Activated CD4-positive, alpha-beta memory T cell treated with anti-CD3 and anti-CD28 coated beads for 36 hours (primary cell): ENCODE measurements at regions of chr2 and their contacts with region 1.

Region 1: GRCh38 chr2:135985018-135985825 is at the start of gene DARS1:
- DNase-seq: peak; percentile 92
- H3K4me3 Mint-ChIP-seq: peak within 1 kb of the TSS; percentile 90
- H3K27ac Mint-ChIP-seq: peak within 1 kb of the TSS; percentile 97
- H3K4me1 Mint-ChIP-seq: peaks cover 48% of the 10 kb centered on the region
- H3K27me3 Mint-ChIP-seq: no peaks in the 10 kb centered on the region
- total RNA-seq, gene DARS1: 215 to 218 TPM

Region 2: DNA sequence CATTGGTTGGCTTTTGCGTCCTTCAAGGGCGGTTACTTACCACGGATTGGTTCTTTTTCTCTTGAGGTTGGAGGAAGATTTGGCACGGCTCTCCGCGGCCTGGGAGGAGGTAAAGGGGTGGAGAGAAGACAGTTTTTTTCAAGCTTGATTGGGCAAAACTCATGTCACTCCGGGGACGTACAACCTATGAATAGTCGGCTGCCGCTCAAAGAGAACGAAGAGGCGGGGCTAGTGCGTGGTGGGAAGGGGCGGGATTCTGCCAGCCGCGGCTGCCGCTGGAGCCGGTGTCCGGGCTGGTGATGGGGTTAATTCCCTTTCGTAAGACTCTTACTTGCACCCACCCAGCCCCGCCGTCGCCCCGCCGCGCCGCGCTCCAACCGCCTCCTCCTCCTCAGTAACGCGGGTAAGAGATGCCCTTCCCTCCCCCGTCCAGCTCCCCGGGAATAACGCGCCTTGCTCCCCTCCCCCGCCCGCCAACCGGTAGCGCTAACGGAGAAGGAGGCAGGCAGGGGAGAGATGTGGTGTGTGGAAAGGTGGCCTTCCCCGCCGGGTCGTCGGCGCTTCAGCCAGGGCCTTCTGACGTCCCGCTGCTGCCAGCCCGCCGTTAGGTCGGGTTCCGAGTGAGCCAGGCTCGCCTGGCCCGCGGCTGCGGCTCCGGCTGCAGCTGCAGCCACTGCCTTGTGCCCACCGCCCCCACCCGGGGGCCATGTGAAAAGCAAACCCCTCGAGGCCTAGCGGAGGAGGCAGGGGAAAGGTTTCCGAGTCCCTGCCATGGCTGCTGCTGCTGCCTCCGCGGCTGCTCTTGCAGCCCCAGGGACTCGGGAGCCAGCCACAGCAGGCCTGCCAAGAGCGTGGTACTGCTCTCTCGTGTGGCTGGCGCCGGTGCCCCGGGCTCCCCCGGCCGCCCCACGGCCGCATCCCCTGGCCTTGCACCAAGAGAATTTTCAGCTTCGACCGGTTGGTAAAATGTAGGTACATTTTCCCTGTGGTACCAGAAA is 453.7 kb before region 1 on chr2 and contains the start of gene R3HDM1:
- CTCF ChIA-PET with region 1: no interaction called
- POLR2A ChIA-PET with region 1: no interaction called
- intact Hi-C with region 1: loop called (anchors 2 kb)
- DNase-seq: peak; percentile 97
- H3K4me3 Mint-ChIP-seq: no peak within 1 kb of the TSS
- H3K27ac Mint-ChIP-seq: peak within 1 kb of the TSS; percentile 71
- H3K4me1 Mint-ChIP-seq: peaks cover 29% of the 10 kb centered on the region
- H3K27me3 Mint-ChIP-seq: no peaks in the 10 kb centered on the region
- total RNA-seq, gene R3HDM1: 49.3 to 56.3 TPM

Region 3: DNA sequence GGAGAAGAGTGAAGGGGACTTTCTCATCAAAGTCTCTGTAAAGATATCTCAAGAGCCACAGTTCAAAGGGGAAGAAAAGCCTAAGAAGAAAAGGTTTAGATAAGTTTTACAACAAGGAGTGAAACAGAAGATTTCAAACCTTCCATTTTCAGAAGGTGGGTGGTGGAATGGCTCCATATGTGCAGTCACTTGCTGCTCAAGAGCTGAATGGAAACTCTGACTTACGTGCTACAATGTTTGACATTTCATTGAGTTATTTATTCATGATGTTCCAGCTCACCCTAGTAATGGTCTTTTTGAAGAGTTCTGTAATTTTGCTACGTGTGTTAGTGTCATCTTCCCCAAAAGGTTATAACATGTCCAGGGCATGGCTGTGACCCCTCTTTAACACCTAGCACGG is 170.0 kb before region 1 on chr2:
- CTCF ChIA-PET with region 1: no interaction called
- POLR2A ChIA-PET with region 1: no interaction called
- intact Hi-C with region 1: no loop called
- DNase-seq: no peak
- H3K4me3 Mint-ChIP-seq: no peak overlapping the region
- H3K27ac Mint-ChIP-seq: peak overlapping the region; percentile 76
- H3K4me1 Mint-ChIP-seq: peaks cover 30% of the 10 kb centered on the region
- H3K27me3 Mint-ChIP-seq: peaks cover 2% of the 10 kb centered on the region

Region 4: DNA sequence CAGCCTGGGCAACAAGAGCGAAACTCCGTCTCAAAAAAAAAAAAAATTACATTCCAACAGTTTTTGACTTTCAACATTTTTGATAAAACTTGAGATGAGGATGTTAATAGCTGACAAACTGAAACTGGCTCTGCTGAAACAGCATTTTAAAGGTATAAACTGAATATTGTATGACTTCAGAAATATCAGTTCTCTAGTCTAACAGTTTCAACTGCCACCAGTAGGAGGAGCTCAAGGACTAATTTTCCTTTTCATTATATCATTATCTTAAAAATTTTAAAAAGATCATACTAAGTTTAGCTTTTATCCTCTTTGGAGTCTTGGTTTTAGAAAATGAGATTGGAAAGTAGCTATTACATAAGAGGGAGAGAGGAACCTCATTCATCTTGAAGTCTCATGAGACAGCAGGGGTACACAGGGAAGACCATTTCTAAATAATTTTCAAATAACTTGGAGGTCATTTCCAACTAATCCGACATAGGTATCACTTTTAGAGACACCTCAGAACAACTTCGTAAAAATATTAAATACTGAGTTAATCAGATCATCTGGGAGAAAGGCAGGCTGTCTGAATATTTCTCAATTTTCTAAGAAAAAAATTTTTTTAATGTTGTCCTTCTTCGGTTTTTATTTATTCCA is 71.4 kb before region 1 on chr2:
- CTCF ChIA-PET with region 1: interaction called, 9 read pairs
- POLR2A ChIA-PET with region 1: no interaction called
- intact Hi-C with region 1: loop called (anchors 2 kb)
- DNase-seq: no peak
- H3K4me3 Mint-ChIP-seq: no peak overlapping the region
- H3K27ac Mint-ChIP-seq: no peak overlapping the region
- H3K4me1 Mint-ChIP-seq: peaks cover 14% of the 10 kb centered on the region
- H3K27me3 Mint-ChIP-seq: no peaks in the 10 kb centered on the region

Region 5: GRCh38 chr2:135996304-135996703 is 11.1 kb after region 1 on chr2:
- CTCF ChIA-PET with region 1: no interaction called
- POLR2A ChIA-PET with region 1: interaction called, 4 read pairs
- intact Hi-C with region 1: loop called (anchors 1 kb)
- DNase-seq: peak; percentile 44
- H3K4me3 Mint-ChIP-seq: no peak overlapping the region
- H3K27ac Mint-ChIP-seq: no peak overlapping the region
- H3K4me1 Mint-ChIP-seq: peaks cover 13% of the 10 kb centered on the region
- H3K27me3 Mint-ChIP-seq: no peaks in the 10 kb centered on the region

Region 6: GRCh38 chr2:136059036-136059472 is 73.8 kb after region 1 on chr2:
- CTCF ChIA-PET with region 1: interaction called, 3 read pairs
- POLR2A ChIA-PET with region 1: interaction called, 44 read pairs
- intact Hi-C with region 1: loop called (anchors 1 kb)
- DNase-seq: no peak
- H3K4me3 Mint-ChIP-seq: no peak overlapping the region
- H3K27ac Mint-ChIP-seq: no peak overlapping the region
- H3K4me1 Mint-ChIP-seq: peaks cover 63% of the 10 kb centered on the region
- H3K27me3 Mint-ChIP-seq: no peaks in the 10 kb centered on the region

Region 7: DNA sequence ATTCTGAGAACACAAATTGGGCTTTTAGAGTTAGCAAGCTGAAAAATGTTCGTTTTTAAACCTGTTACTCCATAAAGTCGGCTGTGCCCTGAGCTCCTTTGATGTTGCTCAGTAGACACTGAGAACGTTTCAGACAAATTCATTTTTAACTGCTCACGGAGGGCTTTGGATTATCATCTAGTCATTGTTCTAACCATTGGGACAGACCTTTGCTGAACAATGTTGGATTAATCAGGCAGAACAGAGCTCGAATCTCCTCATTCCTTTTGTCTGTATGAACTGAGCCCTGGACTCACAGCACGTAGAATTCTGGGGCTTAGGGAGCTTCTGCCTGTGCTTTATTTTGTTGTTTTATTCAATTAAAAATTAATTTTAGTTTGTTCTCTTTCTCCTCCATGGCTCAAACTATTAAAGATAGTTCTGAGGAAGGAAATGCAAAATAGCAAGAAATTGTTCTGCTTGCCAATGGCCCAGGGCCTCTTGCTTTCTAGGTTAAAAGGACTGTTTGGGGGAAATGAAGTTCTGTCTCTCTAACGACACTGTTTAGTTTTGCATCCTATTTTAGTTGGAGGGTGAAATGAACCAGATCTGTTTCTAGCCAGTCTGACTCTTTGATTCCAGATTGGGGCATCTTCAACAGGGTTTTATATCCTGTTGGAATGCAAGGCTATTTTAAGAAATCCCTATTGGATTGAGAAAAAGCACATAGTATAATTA is 247.4 kb after region 1 on chr2:
- CTCF ChIA-PET with region 1: no interaction called
- POLR2A ChIA-PET with region 1: no interaction called
- intact Hi-C with region 1: no loop called
- DNase-seq: no peak
- H3K4me3 Mint-ChIP-seq: no peak overlapping the region
- H3K27ac Mint-ChIP-seq: no peak overlapping the region
- H3K4me1 Mint-ChIP-seq: peaks cover 18% of the 10 kb centered on the region
- H3K27me3 Mint-ChIP-seq: no peaks in the 10 kb centered on the region

Region 8: GRCh38 chr2:136327162-136327852 is 342.1 kb after region 1 on chr2:
- CTCF ChIA-PET with region 1: no interaction called
- POLR2A ChIA-PET with region 1: interaction called, 4 read pairs
- intact Hi-C with region 1: loop called (anchors 1 kb)
- DNase-seq: peak; percentile 93
- H3K4me3 Mint-ChIP-seq: peak overlapping the region; percentile 60
- H3K27ac Mint-ChIP-seq: peak overlapping the region; percentile 90
- H3K4me1 Mint-ChIP-seq: peaks cover 73% of the 10 kb centered on the region
- H3K27me3 Mint-ChIP-seq: no peaks in the 10 kb centered on the region